Right ventricle myocardium superior (tissue), 1 donor: ENCODE measurements at regions of chr3 and their contacts with region 1.

Region 1: GRCh38 chr3:170317954-170318353 is 39.6 kb upstream of the SKIL start:
- DNase-seq: no peak
- ATAC-seq: no peak

Region 2: GRCh38 chr3:170414202-170414663 is 96.3 kb after region 1 on chr3:
- intact Hi-C with region 1: loop called (anchors 10 kb)
- DNase-seq: no peak
- ATAC-seq: peak; percentile 81

Region 3: DNA sequence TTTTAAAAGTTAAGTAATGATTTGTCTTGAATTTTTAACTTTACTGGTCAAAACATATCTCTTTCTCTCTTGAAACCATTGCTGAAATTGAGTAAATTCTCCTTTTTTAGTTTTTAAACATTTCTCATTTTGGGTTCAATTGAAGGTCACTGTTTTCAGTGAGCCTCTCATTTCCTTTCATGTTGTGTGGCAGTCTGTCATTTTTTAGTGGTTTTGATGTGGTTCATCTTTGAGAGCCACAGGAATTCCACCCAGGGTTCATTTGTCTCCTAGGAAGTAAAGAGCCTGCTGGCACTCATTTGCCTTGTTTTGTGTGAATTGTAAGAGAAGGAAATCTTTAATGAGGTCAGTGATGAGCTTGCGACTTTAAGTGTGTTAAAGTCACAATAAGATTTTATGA is 111.1 kb after region 1 on chr3:
- intact Hi-C with region 1: no loop called
- DNase-seq: no peak
- ATAC-seq: no peak

Region 4: DNA sequence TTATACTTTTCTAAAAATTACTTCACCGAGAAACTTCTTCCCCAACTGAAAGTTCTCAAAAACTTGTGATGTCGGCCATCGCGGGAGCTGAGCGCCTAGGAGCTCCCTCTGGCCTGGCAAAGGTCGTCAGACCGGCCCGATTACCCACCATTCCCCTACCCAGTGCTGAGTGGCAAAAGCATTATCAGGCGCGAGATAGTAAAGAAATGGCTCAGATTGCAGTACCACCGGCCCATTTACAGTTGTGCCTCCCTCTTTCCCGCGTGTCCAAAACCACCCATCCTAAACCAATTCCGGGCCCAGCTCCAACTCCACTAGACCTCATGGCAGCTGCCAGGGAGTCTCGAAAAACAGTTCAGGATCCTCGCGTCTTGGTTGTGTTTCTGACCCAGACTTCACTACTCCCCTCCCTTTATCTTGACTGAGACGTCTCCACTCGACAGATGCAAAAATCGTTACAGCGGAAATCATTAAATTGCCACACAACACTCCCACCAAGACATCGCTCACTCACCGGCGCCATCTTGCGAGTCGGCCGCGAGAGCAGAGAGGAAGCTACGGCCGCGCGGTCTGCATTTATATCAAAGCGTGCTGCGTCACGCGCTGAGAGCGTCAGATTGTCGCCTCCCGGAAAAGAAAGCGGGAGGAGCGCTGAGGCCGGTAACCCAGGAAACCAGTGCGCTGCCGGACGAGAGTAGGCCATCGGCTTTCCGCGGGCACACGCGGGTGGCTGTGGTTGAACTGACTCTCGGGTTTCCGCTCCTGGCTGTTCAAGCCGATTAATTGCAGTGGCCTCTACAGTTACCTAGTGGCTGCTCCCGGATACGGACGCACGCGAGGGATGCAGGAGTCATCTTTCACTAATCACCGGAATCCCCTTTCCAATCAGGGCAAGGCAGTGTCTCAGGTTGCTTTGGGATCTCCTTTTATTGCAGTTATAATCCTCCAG is 552.0 kb after region 1 on chr3 and contains the start of gene RPL22L1:
- intact Hi-C with region 1: no loop called
- DNase-seq: peak; percentile 97
- ATAC-seq: peak; percentile 99
- total RNA-seq, gene RPL22L1: 8.0 TPM